ENCODE measurements at regions of chr5 and their contacts with region 1.

Region 1: GRCh38 chr5:172833686-172834414 is at the start of gene ERGIC1:
- DNase-seq: peak in 1 of 2 experiments; percentile 86
- H3K4me3 ChIP-seq: peak within 1 kb of the TSS; percentile 63 to 75 (median 69)
- H3K27ac ChIP-seq: peak within 1 kb of the TSS; percentile 73
- H3K4me1 ChIP-seq: peaks cover 4 to 13% (median 9%) of the 10 kb centered on the region in 4 experiments
- H3K27me3 ChIP-seq: no peaks in the 10 kb centered on the region
- CTCF ChIP-seq: no peak
- EP300 ChIP-seq: no peak
- POLR2A ChIP-seq: peak; percentile 70 to 74
- RAD21 ChIP-seq: no peak
- total RNA-seq, gene ERGIC1: 95.3 and 96.1 TPM in 2 replicates

Region 2: GRCh38 chr5:172849606-172850453 is 16.0 kb after region 1 on chr5:
- CTCF ChIA-PET with region 1: interaction called, 4 read pairs
- POLR2A ChIA-PET with region 1: interaction called, 10 read pairs
- DNase-seq: no peak
- H3K4me3 ChIP-seq: no peak overlapping the region
- H3K27ac ChIP-seq: no peak overlapping the region
- H3K4me1 ChIP-seq: peaks cover 0 to 6% (median 1%) of the 10 kb centered on the region in 4 experiments; a peak in 4 of 7 replicates
- H3K27me3 ChIP-seq: no peaks in the 10 kb centered on the region
- CTCF ChIP-seq: no peak
- EP300 ChIP-seq: no peak
- POLR2A ChIP-seq: no peak
- RAD21 ChIP-seq: no peak